ENCODE measurements at regions of chr13 and their contacts with region 1.

Region 1: DNA sequence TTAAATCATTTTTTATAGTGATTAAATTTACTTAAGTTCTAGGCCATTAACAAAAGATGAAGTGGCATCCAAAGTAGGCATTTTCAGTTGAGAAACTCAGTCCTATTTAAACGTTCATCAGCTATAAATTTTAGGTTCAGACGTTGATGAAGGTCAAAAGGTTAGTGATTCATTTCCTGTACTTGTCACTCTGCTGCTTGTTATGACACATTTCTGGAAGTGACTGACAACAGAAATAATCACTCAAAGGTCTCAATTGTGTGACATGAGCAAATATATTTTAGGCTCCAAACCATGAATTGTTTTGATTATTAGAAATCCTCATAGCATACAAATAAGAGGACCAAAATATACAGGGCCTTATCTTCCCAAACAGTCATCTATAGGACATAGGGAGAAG is 10.3 kb upstream of the EDNRB start:
- DNase-seq: no peak
- ATAC-seq: no peak
- H3K4me3 ChIP-seq: no peak overlapping the region
- H3K4me3 Mint-ChIP-seq: no peak overlapping the region
- H3K27ac ChIP-seq: no peak overlapping the region
- H3K27ac Mint-ChIP-seq: no peak overlapping the region
- H3K4me1 ChIP-seq: no peaks in the 10 kb centered on the region
- H3K4me1 Mint-ChIP-seq: peaks cover 0 to 3% (median 0%) of the 10 kb centered on the region in 3 donors
- H3K27me3 ChIP-seq: peaks cover 0 to 6% of the 10 kb centered on the region in 2 experiments
- H3K27me3 Mint-ChIP-seq: peaks cover 15 to 18% of the 10 kb centered on the region in 2 donors

Region 2: GRCh38 chr13:77946522-77946921 is 17.6 kb after region 1 on chr13:
- CTCF ChIA-PET with region 1: no interaction called
- POLR2A ChIA-PET with region 1: interaction called in 1 of 2 experiments, 10 read pairs
- DNase-seq: no peak
- ATAC-seq: no peak
- H3K4me3 ChIP-seq: no peak overlapping the region
- H3K4me3 Mint-ChIP-seq: no peak overlapping the region
- H3K27ac ChIP-seq: no peak overlapping the region
- H3K27ac Mint-ChIP-seq: no peak overlapping the region
- H3K4me1 ChIP-seq: no peaks in the 10 kb centered on the region
- H3K4me1 Mint-ChIP-seq: no peaks in the 10 kb centered on the region
- H3K27me3 ChIP-seq: no peaks in the 10 kb centered on the region
- H3K27me3 Mint-ChIP-seq: no peaks in the 10 kb centered on the region